ENCODE measurements at regions of chr6 and their contacts with region 1.

Region 1: GRCh38 chr6:44172731-44173500 is 14.3 kb downstream of the CAPN11 start:
- DNase-seq: peak; percentile 70 to 87 (median 83)
- H3K4me3 ChIP-seq: no peak overlapping the region
- H3K27ac ChIP-seq: no peak overlapping the region
- H3K27me3 ChIP-seq: no peaks in the 10 kb centered on the region
- CTCF ChIP-seq: peak; percentile 56 to 94 (median 87)

Region 2: DNA sequence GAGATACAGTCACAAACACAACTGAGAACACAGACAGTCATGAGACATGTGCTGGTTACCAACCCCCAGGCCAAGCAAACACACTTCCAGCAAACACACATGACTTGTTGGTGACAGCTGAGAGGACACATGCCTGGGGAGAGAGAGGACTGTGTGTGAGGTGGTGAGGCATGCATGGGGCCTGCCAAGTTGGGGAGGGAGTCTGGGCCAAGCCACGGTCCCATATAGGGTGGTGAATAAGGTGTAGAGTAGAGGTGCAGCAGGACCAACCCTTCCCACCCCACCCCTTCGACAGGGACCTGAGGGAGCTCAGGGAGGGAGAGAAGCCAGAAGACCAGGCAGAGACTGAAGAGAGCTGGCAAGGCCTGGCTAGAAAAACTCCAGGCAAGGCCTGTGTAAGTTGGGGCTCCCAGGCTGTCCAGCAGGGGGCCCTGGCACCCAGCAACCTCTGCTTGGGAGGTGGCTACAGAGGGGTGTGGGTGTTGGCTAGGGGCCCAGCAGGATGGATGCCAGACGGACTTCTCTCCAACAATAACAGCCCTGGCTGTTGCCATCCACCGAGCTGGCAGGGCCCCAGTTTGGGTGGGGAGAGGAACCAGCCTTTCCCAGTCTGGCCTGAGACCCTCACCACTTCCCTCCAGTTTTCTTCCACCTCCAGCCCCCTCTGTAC is 48.5 kb after region 1 on chr6:
- intact Hi-C with region 1: loop called in 1 of 2 experiments (anchors 1 kb)
- DNase-seq: peak in 9 of 10 donors; percentile 57 to 81 (median 70)
- H3K4me3 ChIP-seq: peak overlapping the region in 5 of 59 donors; percentile 2 to 19 (median 13)
- H3K27ac ChIP-seq: peak overlapping the region in 54 of 59 donors; percentile 29 to 97 (median 74)
- H3K27me3 ChIP-seq: no peaks in the 10 kb centered on the region
- CTCF ChIP-seq: peak in 55 of 56 donors; percentile 36 to 75 (median 63)

Region 3: DNA sequence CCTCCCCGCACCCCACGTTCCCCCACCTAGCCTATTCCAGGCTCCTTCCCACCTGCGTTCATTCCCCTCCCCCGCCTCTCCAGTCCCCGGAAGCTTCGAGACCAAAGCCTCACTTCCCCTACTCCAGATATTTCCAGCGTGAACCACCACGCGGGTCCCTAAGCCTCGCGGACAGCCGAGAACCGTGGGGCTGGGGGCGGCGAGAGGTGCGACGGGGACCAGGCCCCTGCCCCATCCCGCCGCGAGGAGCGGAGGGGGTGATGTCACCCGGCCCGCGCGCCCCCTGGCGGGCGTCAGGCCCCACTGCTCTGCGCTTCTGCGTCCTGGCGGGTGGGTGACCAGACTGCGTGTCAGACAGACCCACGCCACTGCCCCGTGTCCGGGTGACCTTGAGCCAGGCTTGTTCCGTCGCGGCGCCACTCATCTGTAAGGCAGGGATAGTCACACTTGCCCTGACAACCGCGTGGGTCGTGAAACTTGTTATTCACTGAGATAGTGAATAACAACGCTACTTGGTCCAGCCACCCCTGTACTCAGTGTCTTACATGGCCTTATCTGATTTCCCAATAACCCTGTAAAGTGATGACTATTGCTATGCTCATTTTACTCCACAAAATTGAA is 65.0 kb after region 1 on chr6:
- intact Hi-C with region 1: loop called (anchors 1 to 5 kb)
- DNase-seq: peak; percentile 72 to 93 (median 78)
- H3K4me3 ChIP-seq: peak overlapping the region; percentile 34 to 81 (median 68)
- H3K27ac ChIP-seq: peak overlapping the region; percentile 85 to 99 (median 97)
- H3K27me3 ChIP-seq: no peaks in the 10 kb centered on the region
- CTCF ChIP-seq: peak; percentile 80 to 99 (median 96)

Region 4: GRCh38 chr6:44312901-44313788 is 140.2 kb after region 1 on chr6 and contains the start of gene AARS2:
- intact Hi-C with region 1: loop called in 1 of 2 experiments (anchors 10 kb)
- DNase-seq: peak; percentile 75 to 92 (median 83)
- H3K4me3 ChIP-seq: peak within 1 kb of the TSS; percentile 67 to 100 (median 90)
- H3K27ac ChIP-seq: peak within 1 kb of the TSS in 54 of 59 donors; percentile 7 to 93 (median 76)
- H3K27me3 ChIP-seq: peaks cover 0 to 1% (median 0%) of the 10 kb centered on the region in 45 donors
- CTCF ChIP-seq: peak; percentile 85 to 99 (median 97)
- total RNA-seq, gene AARS2: 11.9 to 24.4 (median 16.4) TPM

Region 5: GRCh38 chr6:44338228-44339122 is 165.6 kb after region 1 on chr6:
- intact Hi-C with region 1: loop called in 1 of 2 experiments (anchors 5 kb)
- DNase-seq: peak; percentile 44 to 76 (median 70)
- H3K4me3 ChIP-seq: no peak overlapping the region
- H3K27ac ChIP-seq: peak overlapping the region in 41 of 59 donors; percentile 3 to 80 (median 46)
- H3K27me3 ChIP-seq: peaks cover 0 to 20% (median 0%) of the 10 kb centered on the region in 45 donors
- CTCF ChIP-seq: peak; percentile 51 to 88 (median 75)

Measured in dorsolateral prefrontal cortex (tissue), 120 donors.